ENCODE measurements at regions of chr19 and their contacts with region 1.

Region 1: GRCh38 chr19:20923077-20923871 is at the start of gene ZNF85:
- DNase-seq: peak; percentile 85
- H3K4me3 Mint-ChIP-seq: peak within 1 kb of the TSS; percentile 94
- H3K27ac Mint-ChIP-seq: peak within 1 kb of the TSS; percentile 92
- H3K4me1 Mint-ChIP-seq: no peaks in the 10 kb centered on the region
- H3K27me3 Mint-ChIP-seq: no peaks in the 10 kb centered on the region
- total RNA-seq, gene ZNF85: 10.0 and 11.1 TPM in 2 replicates

Region 2: GRCh38 chr19:20565321-20566018 is 357.8 kb before region 1 on chr19 and contains the start of gene ZNF737:
- intact Hi-C with region 1: loop called (anchors 2 kb)
- DNase-seq: peak; percentile 81
- H3K4me3 Mint-ChIP-seq: peak within 1 kb of the TSS; percentile 97
- H3K27ac Mint-ChIP-seq: peak within 1 kb of the TSS; percentile 94
- H3K4me1 Mint-ChIP-seq: peaks cover 13% of the 10 kb centered on the region
- H3K27me3 Mint-ChIP-seq: no peaks in the 10 kb centered on the region
- total RNA-seq, gene ZNF737: 4.6 and 5.5 TPM in 2 replicates

Region 3: DNA sequence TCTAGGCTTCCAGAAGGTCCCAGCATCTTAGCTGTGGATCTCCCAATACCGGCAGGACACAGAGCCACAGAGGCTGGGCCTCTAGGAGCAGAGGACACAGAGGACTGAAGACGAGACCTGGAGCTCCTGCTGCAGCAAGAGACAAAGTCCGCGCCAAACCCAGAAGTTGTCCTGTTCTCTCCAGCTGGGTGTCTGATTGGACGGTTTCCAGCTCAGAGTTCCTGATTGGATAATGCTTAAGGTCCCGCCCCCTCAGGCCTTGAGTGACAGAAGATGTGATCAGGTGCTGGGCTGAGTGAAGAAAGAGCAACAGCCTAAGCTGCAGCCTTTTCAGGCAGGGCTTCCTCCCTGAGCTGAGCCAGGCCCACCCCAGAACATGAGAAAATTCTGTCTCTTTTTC is 60.1 kb before region 1 on chr19:
- intact Hi-C with region 1: no loop called
- DNase-seq: no peak
- H3K4me3 Mint-ChIP-seq: no peak overlapping the region
- H3K27ac Mint-ChIP-seq: no peak overlapping the region
- H3K4me1 Mint-ChIP-seq: no peaks in the 10 kb centered on the region
- H3K27me3 Mint-ChIP-seq: no peaks in the 10 kb centered on the region

Region 4: DNA sequence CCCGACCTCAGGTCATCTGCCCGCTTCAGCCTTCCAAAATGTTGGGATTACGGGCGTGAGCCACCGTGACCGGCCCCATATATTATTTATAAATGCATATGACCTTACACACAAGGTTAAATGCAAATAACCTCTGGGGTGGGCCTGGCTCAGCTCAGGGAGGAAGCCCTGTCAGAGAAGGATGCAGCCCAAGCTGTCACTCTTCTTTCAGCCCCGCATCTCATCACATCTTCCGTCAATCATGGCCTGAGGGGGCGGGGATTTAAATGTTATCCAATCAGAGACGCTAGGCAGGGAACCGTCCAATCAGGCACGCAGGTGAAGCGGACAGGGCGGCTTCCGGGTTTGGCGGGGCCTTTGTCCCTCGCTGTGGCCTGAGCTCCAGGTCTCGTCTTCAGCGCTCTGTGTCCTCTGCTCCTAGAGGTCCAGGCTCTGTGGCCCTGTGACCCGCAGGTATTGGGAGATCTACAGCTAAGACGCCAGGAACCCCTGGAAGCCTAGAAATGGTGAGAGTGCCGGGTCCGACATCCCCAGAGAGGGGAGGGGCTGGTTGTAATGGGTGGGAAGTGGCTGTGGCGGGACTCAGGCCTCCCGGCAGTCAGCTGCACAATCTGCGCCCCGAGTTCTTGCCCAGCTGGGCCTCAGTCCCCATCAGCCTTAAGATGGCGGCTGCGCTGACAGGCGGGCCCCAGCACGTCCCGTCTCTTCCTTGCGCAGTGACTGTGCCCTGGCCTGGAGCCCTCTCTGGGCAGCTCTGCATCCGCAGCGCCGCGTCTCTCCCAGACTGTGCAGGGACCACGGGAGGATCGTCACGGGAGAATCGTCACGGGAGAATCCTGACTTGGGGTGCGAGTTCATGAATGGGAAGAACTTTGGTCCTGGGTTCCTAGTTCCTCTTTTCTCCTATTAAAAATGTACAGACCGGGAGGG is 97.3 kb after region 1 on chr19 and contains the start of gene ZNF430:
- intact Hi-C with region 1: loop called (anchors 1 kb)
- DNase-seq: peak; percentile 93
- H3K4me3 Mint-ChIP-seq: peak within 1 kb of the TSS; percentile 99
- H3K27ac Mint-ChIP-seq: peak within 1 kb of the TSS; percentile 98
- H3K4me1 Mint-ChIP-seq: peaks cover 26% of the 10 kb centered on the region
- H3K27me3 Mint-ChIP-seq: peaks cover 2% of the 10 kb centered on the region
- total RNA-seq, gene ZNF430: 20.3 and 21.5 TPM in 2 replicates

Region 5: DNA sequence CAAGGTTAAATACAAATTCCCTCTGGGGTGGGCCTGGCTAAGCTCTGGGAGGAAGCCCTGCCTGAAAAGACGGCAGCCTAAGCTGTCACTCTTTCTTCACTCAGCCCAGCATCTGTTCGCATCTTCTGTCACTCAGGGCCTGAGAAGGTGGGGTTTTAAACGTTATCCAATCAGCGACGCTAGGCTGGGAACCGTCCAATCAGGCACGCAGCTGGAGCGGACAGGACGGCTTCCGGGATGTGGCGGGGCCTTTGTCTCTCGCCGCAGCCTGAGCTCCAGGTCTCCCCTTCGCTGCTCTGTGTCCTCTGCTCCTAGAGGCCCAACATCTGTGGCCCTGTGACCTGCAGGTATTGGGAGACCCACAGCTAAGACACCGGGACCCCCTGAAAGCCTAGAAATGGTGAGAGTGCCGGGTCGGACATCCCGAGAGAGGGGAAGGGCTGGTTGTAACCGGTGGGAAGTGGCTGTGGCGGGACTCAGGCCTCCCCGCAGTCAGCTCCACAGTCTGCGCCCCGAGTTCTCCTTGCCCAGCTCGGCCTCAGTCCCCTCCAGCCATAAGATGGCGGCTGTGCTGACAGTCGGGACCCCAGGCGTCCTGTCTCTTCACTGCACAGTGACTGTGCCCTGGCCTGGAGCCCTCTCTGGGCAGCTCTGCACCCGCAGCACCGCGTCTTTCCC is 218.7 kb after region 1 on chr19 and contains the start of gene ZNF431:
- intact Hi-C with region 1: loop called (anchors 2 kb)
- DNase-seq: peak; percentile 85
- H3K4me3 Mint-ChIP-seq: peak within 1 kb of the TSS; percentile 96
- H3K27ac Mint-ChIP-seq: peak within 1 kb of the TSS; percentile 91
- H3K4me1 Mint-ChIP-seq: peaks cover 25% of the 10 kb centered on the region
- H3K27me3 Mint-ChIP-seq: no peaks in the 10 kb centered on the region
- total RNA-seq, gene ZNF431: 16.0 and 16.8 TPM in 2 replicates

Region 6: DNA sequence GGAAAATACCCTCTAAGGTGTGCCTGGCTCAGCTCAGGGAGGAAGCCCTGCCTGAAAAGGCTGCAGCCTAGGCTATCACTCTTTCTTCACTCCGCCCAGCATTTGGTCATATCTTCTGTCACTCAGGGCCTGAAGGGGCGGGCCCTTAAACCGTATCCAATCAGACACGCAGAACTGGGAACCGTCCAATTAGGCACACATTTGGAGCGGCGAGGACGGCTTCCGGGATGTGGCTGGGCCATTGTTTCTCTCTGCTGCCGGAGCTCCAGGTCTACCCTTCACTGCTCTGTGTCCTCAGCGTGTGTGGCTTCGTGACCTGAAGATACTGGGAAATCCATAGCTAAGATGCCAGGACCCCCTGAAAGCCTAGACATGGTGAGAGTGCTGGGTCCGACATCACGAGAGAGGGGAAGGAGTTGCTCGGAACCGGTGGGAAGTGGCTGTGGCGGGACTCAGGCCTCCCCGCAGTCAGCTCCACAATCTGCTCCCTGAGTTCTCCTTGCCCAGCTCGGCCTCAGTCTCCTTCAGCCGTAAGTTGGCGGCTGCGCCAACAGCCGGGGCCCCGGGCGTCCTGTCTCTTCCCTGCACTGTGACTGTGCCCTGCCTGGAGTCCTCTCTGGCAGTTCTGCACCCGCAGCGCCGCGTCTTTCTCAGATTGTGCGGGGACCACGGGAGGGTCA is 473.8 kb after region 1 on chr19 and contains the start of gene ZNF493:
- intact Hi-C with region 1: loop called (anchors 2 kb)
- DNase-seq: peak; percentile 87
- H3K4me3 Mint-ChIP-seq: peak within 1 kb of the TSS; percentile 97
- H3K27ac Mint-ChIP-seq: peak within 1 kb of the TSS; percentile 83
- H3K4me1 Mint-ChIP-seq: peaks cover 14% of the 10 kb centered on the region
- H3K27me3 Mint-ChIP-seq: no peaks in the 10 kb centered on the region
- total RNA-seq, gene ZNF493: 9.6 and 12.6 TPM in 2 replicates

Region 7: DNA sequence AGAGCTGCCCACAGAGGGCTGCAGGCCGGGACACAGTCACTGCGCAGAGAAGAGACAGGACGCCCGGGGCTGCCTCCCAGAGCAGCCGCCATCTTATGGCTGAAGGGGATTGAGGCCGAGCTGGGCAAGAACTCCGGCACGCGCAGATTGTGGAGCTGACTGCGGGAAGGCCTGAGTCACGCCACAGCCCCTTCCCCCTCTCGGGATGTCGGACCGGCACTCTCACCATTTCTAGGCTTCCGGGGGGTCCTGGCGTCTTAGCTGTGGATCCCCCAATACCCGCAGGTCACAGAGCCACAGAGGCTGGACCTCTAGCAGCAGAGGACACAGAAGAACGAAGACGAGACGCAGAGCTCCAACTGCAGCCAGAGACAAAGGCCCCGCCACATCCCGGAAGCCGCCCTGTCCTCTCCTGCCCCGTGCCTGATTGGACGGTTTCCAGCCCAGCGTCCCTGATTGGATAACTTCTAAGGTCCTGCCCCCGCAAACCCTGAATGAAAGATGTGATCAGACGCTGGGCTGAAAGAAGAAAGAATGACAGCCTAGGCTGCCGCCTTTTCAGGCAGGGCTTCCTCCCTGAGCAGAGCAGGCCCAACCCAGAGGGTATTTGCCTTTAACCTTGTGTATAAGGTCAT is 912.7 kb after region 1 on chr19 and contains the start of gene ZNF43:
- intact Hi-C with region 1: loop called (anchors 5 kb)
- DNase-seq: peak; percentile 87
- H3K4me3 Mint-ChIP-seq: peak within 1 kb of the TSS; percentile 98
- H3K27ac Mint-ChIP-seq: peak within 1 kb of the TSS; percentile 98
- H3K4me1 Mint-ChIP-seq: peaks cover 2% of the 10 kb centered on the region
- H3K27me3 Mint-ChIP-seq: peaks cover 2% of the 10 kb centered on the region
- total RNA-seq, gene ZNF43: 29.9 and 30.5 TPM in 2 replicates

Region 8: GRCh38 chr19:21900372-21900771 is 977.1 kb after region 1 on chr19:
- intact Hi-C with region 1: no loop called
- DNase-seq: no peak
- H3K4me3 Mint-ChIP-seq: no peak overlapping the region
- H3K27ac Mint-ChIP-seq: no peak overlapping the region
- H3K4me1 Mint-ChIP-seq: no peaks in the 10 kb centered on the region
- H3K27me3 Mint-ChIP-seq: no peaks in the 10 kb centered on the region

Measured in activated T-helper 1 cell treated with anti-CD3 and anti-CD28 coated beads, Interleukin-12 subunit alpha, Interleukin-12 subunit beta, Interleukin-2, Interleukin-4 antibody, amounts not matched to agents 30 ng/mL and 10 ng/mL and 1 ng/mL, durations not matched to agents 14 hours and 24 hours and 36 hours (primary cell).